ENCODE measurements at regions of chr13 and their contacts with region 1.

Region 1: GRCh38 chr13:36736119-36736726 is 62.4 kb downstream of the SERTM1 start:
- DNase-seq: peak; percentile 16
- H3K4me3 ChIP-seq: no peak overlapping the region
- H3K27ac ChIP-seq: no peak overlapping the region
- H3K4me1 ChIP-seq: no peaks in the 10 kb centered on the region
- H3K27me3 ChIP-seq: no peaks in the 10 kb centered on the region
- CTCF ChIP-seq: peak; percentile 48 to 65

Region 2: DNA sequence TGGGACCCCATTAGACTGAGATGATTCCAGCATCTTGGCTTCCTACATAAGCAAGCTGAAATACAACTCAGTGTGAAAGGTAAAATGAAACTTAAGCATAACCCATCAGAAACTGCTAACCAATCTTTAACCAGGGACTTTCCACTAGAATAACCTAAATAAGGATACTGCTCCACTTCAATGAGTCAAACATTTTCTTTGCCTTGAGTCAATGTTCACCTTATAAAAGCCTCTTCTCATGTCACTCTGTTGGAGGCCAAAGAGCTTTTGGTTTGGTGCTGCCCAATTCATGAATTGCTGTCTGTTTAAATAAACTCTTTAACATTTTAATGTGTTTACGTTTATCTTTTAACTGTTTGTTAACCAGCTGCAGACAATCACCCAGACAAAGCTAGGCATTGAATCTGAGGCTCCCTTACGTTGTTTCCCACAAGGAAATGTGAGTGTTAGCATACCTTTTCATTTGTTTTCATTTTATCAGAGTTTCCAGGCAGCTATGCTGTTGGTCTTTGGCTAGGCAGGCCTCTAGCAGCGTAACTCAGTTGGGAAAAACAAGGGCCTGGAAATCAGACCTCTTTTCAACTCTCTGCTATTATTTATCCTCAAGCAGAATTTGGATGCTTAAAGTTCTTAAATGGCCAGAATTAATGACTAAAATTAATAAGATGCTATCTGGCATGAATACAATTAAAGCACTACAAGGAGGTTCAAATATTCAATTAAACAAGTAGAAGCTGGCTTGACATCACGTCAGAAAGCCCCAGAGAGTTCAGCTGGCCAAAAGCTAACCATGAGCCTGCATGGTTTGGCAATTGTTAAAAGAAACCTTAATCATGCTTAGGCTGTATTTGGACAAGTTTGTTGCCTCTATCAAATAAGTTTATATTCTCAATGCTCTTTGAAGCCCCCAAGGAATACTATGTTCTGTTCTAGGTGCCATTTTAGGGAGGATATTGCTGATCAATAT is 805.3 kb before region 1 on chr13:
- CTCF ChIA-PET with region 1: no interaction called
- dilution Hi-C with region 1: no loop called
- in situ Hi-C with region 1: no loop called
- intact Hi-C with region 1: no loop called
- DNase-seq: peak; percentile 8
- H3K4me3 ChIP-seq: no peak overlapping the region
- H3K27ac ChIP-seq: no peak overlapping the region
- H3K4me1 ChIP-seq: no peaks in the 10 kb centered on the region
- H3K27me3 ChIP-seq: no peaks in the 10 kb centered on the region
- CTCF ChIP-seq: no peak

Region 3: DNA sequence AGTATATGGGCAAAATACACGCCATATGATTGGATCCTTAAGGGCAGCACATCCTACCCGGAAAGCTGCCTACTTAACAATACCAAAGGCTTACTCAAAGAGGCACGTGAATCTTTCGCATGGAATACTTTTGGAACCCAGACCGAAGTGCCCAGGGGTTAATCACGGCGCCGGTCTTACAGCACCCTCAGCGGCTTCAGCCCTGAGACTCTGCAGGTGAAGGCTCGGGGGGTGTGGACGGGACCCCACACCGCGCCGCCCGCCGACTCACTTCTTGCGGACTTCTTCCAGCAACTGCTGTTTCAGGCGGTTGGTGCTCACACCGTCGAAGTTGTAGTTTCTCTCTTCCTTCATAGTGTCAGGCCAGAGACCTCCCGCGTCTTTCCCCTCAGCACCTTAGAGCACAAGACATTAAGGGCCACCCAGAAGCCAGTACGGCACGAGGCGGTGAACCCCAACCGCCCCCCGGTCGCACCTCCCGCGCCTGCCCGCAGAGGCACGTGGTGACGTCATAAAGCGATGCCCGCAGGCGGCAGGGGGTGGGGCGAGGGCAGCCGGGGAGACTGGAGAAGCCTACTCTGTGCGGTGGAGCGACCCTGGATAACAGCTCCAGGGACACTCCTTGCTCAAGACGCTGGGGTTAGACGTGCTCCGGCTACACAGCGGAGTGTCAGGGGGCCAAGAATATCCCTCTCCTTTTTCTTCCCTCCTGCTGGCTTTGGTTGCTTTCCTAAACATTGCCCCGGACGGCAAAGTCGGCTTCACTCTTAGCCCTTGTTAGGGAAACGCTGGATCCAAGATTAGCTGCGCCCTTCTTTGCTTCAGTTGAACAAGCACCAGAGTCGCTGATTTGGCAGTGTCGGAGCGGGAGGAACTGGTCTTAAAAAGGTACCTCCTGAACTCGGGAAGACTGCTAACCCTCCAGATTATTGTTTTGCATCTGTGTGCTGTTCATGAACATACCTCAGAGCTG is 438.6 kb before region 1 on chr13 and contains the start of gene CCDC169:
- CTCF ChIA-PET with region 1: no interaction called
- dilution Hi-C with region 1: no loop called
- in situ Hi-C with region 1: loop called in 1 of 2 experiments (anchors 25 kb)
- intact Hi-C with region 1: no loop called
- DNase-seq: peak; percentile 29
- H3K4me3 ChIP-seq: peak within 1 kb of the TSS; percentile 42 to 59 (median 56)
- H3K27ac ChIP-seq: no peak within 1 kb of the TSS
- H3K4me1 ChIP-seq: no peaks in the 10 kb centered on the region
- H3K27me3 ChIP-seq: no peaks in the 10 kb centered on the region
- CTCF ChIP-seq: no peak
- total RNA-seq, gene CCDC169: 0.83 to 0.89 TPM

Region 4: DNA sequence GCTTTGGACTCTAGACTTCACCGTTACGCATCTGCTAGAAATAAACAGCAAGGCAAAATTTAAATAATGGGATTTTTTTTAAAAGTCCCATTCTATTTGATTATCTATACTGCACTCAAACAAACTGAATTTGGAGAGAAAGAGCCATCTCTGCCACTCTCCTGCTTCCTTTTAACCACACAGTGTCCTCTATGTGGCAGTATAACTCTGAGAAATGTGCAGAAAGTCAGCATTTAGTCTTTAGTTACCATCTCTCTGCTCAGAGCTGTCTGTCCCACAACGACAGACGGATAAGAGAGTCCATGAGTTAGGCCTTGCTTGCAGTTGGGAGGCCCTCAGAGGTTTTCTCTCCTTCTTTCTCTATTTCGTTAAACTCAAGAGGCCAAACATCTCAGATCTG is 282.7 kb before region 1 on chr13:
- CTCF ChIA-PET with region 1: interaction called, 3 read pairs
- dilution Hi-C with region 1: no loop called
- in situ Hi-C with region 1: no loop called
- intact Hi-C with region 1: loop called (anchors 1 kb)
- DNase-seq: no peak
- H3K4me3 ChIP-seq: no peak overlapping the region
- H3K27ac ChIP-seq: no peak overlapping the region
- H3K4me1 ChIP-seq: peaks cover 11% of the 10 kb centered on the region
- H3K27me3 ChIP-seq: no peaks in the 10 kb centered on the region
- CTCF ChIP-seq: peak; percentile 14 to 48

Region 5: GRCh38 chr13:36530050-36530789 is 206.0 kb before region 1 on chr13:
- CTCF ChIA-PET with region 1: interaction called, 3 read pairs
- dilution Hi-C with region 1: no loop called
- in situ Hi-C with region 1: no loop called
- intact Hi-C with region 1: loop called (anchors 1 kb)
- DNase-seq: peak; percentile 69
- H3K4me3 ChIP-seq: no peak overlapping the region
- H3K27ac ChIP-seq: no peak overlapping the region
- H3K4me1 ChIP-seq: peaks cover 38% of the 10 kb centered on the region
- H3K27me3 ChIP-seq: no peaks in the 10 kb centered on the region
- CTCF ChIP-seq: no peak

Region 6: GRCh38 chr13:36761808-36762586 is 25.8 kb after region 1 on chr13:
- CTCF ChIA-PET with region 1: no interaction called
- dilution Hi-C with region 1: no loop called
- in situ Hi-C with region 1: no loop called
- intact Hi-C with region 1: no loop called
- DNase-seq: peak; percentile 61
- H3K4me3 ChIP-seq: no peak overlapping the region
- H3K27ac ChIP-seq: no peak overlapping the region
- H3K4me1 ChIP-seq: peaks cover 28% of the 10 kb centered on the region
- H3K27me3 ChIP-seq: no peaks in the 10 kb centered on the region
- CTCF ChIP-seq: no peak

Region 7: DNA sequence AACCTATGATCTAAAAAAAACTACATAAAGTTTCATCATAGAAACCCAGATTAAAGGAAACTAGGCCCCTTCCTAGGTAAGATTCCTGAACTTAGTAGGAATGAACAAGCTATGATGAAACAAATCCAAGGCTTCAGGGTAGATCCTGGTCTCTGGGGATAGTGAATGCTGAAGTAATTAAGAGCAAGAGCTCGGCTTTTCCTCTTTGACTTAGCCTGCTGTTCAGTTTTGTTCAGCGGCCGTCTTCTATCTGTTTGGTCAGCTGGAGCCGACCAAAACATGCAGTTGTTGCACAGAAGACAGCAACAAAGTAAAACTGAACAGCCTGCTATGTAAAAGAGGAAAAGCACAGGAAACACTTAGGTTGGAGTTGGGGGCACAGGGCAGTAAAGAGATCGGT is 38.7 kb after region 1 on chr13:
- CTCF ChIA-PET with region 1: no interaction called
- dilution Hi-C with region 1: loop called (anchors 5 kb)
- in situ Hi-C with region 1: no loop called
- intact Hi-C with region 1: no loop called
- DNase-seq: no peak
- H3K4me3 ChIP-seq: no peak overlapping the region
- H3K27ac ChIP-seq: no peak overlapping the region
- H3K4me1 ChIP-seq: no peaks in the 10 kb centered on the region
- H3K27me3 ChIP-seq: no peaks in the 10 kb centered on the region
- CTCF ChIP-seq: no peak

Measured in mammary epithelial cell (primary cell).